ENCODE measurements at regions of chr16 and their contacts with region 1.

Region 1: GRCh38 chr16:88700636-88701482 is 5.3 kb downstream of the RNF166 start:
- DNase-seq: peak; percentile 86 to 96 (median 93)
- ATAC-seq: peak; percentile 91
- H3K4me3 ChIP-seq: peak overlapping the region; percentile 56
- H3K4me3 Mint-ChIP-seq: peak overlapping the region; percentile 78 to 98 (median 94)
- H3K27ac ChIP-seq: peak overlapping the region; percentile 88
- H3K27ac Mint-ChIP-seq: peak overlapping the region; percentile 85 to 98 (median 97)
- H3K4me1 ChIP-seq: peaks cover 32 to 60% of the 10 kb centered on the region in 2 donors
- H3K4me1 Mint-ChIP-seq: peaks cover 36 to 69% (median 47%) of the 10 kb centered on the region in 7 donors
- H3K27me3 ChIP-seq: no peaks in the 10 kb centered on the region
- H3K27me3 Mint-ChIP-seq: no peaks in the 10 kb centered on the region

Region 2: DNA sequence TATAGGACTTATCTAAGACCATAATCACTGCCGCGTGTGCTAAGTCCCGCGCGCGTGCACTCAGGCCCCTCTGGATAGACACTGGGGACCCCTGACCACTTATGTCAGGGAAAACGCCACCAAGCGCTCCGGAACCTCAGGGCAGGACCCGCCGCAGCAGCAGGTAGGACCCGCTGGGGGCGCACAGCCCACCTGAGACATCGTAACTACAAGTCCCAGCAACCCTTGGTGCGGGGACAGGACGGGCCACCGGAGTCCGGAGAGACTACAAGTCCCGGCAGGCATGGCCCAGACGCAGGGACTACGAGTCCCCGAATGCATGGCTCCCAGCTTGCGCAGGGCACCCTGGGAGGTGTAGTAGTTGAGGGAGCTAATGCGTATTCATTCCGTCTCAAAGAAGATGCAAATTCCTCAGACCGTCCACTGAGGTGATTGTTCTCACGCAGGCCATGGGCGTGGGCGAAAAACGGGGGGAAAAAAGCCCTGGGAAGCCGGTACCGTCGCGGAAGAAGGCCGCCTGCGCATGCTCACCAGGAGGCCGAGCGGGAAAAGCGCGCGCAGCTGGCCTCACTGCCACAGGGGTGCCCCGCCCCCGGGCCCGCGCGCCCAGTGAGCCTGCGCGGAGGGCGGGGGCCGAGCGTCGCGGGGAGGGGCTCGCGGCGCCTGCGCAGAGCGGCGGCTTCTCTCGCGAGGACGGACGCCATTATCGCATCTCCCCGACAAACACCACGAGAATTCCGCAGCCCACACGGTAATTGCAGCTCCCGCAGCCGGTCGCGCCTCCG is 749.9 kb before region 1 on chr16 and contains the start of gene BANP:
- CTCF ChIA-PET with region 1: no interaction called
- POLR2A ChIA-PET with region 1: no interaction called
- intact Hi-C with region 1: loop called (anchors 5 to 10 kb)
- DNase-seq: peak; percentile 96 to 99 (median 99)
- ATAC-seq: peak; percentile 93
- H3K4me3 ChIP-seq: peak within 1 kb of the TSS; percentile 83
- H3K4me3 Mint-ChIP-seq: peak within 1 kb of the TSS; percentile 92 to 100 (median 99)
- H3K27ac ChIP-seq: peak within 1 kb of the TSS; percentile 90
- H3K27ac Mint-ChIP-seq: peak within 1 kb of the TSS; percentile 97 to 100 (median 99)
- H3K4me1 ChIP-seq: peaks cover 15 to 33% of the 10 kb centered on the region in 2 donors
- H3K4me1 Mint-ChIP-seq: peaks cover 27 to 66% (median 43%) of the 10 kb centered on the region in 7 donors
- H3K27me3 ChIP-seq: no peaks in the 10 kb centered on the region
- H3K27me3 Mint-ChIP-seq: peaks cover 0 to 8% (median 2%) of the 10 kb centered on the region in 5 donors
- total RNA-seq, gene BANP: 43.6 to 81.2 (median 68.5) TPM

Region 3: DNA sequence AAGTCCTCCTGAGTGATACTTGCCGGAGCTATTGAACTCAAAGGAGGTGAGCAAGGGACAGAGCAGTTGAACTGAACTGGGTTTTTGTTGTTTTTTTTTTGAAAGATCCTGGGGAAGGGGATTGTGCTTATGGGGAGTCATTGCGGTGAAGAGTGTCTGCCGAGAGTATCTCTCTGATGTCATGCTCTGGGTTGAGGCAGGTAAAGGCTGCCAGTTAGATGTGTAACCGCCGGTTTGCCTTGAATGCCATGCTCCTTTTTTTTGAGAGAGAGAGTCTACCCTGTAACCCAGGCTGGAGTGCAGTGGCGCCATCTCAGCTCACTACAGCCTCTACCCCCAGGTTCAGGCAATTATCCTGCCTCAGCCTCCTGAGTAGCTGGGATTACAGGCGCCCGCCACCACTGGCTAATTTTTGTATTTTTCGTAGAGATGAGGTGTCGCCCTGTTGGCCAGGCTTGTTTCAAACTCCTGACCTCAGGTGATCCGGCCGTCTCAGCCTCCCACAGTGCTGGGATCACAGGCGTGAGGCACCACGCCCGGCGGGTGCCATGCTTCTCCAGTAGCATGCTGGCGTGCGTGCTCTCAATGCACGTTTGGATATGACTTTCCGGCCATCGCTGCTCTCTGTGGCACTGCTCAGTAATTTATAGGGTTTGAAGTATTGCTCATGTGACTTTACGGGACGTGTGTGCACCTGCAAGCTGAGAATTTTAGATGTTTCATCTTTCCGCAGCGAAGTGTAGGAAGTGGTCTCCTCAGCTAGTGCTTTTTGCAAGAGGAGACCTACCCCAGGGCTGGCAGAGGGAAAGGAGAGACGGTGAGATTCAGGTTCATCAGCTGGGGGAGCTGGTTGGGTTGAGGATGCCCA is 122.2 kb before region 1 on chr16:
- CTCF ChIA-PET with region 1: no interaction called
- POLR2A ChIA-PET with region 1: no interaction called
- intact Hi-C with region 1: no loop called
- DNase-seq: peak in 3 of 9 donors; percentile 8 to 11 (median 8)
- ATAC-seq: peak; percentile 30
- H3K4me3 ChIP-seq: no peak overlapping the region
- H3K4me3 Mint-ChIP-seq: peak overlapping the region in 6 of 10 donors; percentile 14 to 53 (median 34)
- H3K27ac ChIP-seq: no peak overlapping the region
- H3K27ac Mint-ChIP-seq: peak overlapping the region in 6 of 9 donors; percentile 1 to 73 (median 60)
- H3K4me1 ChIP-seq: peaks cover 0 to 3% of the 10 kb centered on the region in 2 donors
- H3K4me1 Mint-ChIP-seq: peaks cover 20 to 64% (median 56%) of the 10 kb centered on the region in 7 donors
- H3K27me3 ChIP-seq: no peaks in the 10 kb centered on the region
- H3K27me3 Mint-ChIP-seq: no peaks in the 10 kb centered on the region

Region 4: GRCh38 chr16:88633684-88634140 is 67.1 kb before region 1 on chr16:
- CTCF ChIA-PET with region 1: no interaction called
- POLR2A ChIA-PET with region 1: interaction called, 3 read pairs
- intact Hi-C with region 1: loop called (anchors 2 to 5 kb)
- DNase-seq: peak in 2 of 9 donors; percentile 26 to 61
- ATAC-seq: peak; percentile 46
- H3K4me3 ChIP-seq: peak overlapping the region; percentile 52
- H3K4me3 Mint-ChIP-seq: peak overlapping the region; percentile 36 to 80 (median 63)
- H3K27ac ChIP-seq: peak overlapping the region; percentile 58
- H3K27ac Mint-ChIP-seq: peak overlapping the region in 2 of 9 donors; percentile 5 to 19
- H3K4me1 ChIP-seq: peaks cover 12 to 24% of the 10 kb centered on the region in 2 donors
- H3K4me1 Mint-ChIP-seq: peaks cover 17 to 36% (median 24%) of the 10 kb centered on the region in 7 donors
- H3K27me3 ChIP-seq: peaks cover 0 to under 1% of the 10 kb centered on the region in 2 donors
- H3K27me3 Mint-ChIP-seq: peaks cover 0 to 24% (median 8%) of the 10 kb centered on the region in 5 donors

Region 5: DNA sequence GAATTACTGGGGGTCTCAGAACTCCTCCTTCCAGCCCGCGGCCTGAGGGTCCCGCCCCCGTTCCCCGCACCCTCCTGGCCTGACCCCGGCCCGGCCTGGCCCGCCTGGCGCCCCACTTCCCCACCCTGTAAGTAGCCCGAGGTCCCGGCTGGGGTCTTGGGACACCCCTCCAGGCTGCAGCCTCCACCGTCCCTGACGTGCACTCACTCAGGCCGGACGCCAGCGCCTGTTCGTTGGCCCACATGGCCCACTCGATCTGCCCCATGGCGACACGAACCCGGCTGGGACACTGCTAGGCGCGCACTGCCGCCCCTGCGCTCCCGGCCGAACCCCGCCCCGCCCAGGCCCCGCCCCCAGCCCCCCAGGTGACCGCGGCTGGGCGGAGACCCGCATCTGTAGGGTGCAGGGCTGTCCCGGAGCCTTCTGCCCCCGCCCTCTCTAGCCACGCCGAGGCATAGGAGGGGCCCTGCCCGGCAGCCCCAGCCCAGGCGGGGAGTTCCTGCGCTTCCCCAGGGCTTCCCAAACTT is 50.0 kb before region 1 on chr16 and contains the start of gene CYBA:
- CTCF ChIA-PET with region 1: interaction called, 4 read pairs
- POLR2A ChIA-PET with region 1: interaction called, 13 read pairs
- intact Hi-C with region 1: loop called (anchors 1 kb)
- DNase-seq: peak; percentile 54 to 88 (median 68)
- ATAC-seq: peak; percentile 92
- H3K4me3 ChIP-seq: peak within 1 kb of the TSS; percentile 78
- H3K4me3 Mint-ChIP-seq: peak within 1 kb of the TSS; percentile 84 to 93 (median 90)
- H3K27ac ChIP-seq: peak within 1 kb of the TSS; percentile 84
- H3K27ac Mint-ChIP-seq: peak within 1 kb of the TSS; percentile 82 to 98 (median 91)
- H3K4me1 ChIP-seq: peaks cover 20 to 28% of the 10 kb centered on the region in 2 donors
- H3K4me1 Mint-ChIP-seq: peaks cover 6 to 27% (median 13%) of the 10 kb centered on the region in 7 donors
- H3K27me3 ChIP-seq: no peaks in the 10 kb centered on the region
- H3K27me3 Mint-ChIP-seq: no peaks in the 10 kb centered on the region
- total RNA-seq, gene CYBA: 240 to 498 (median 281) TPM

Region 6: DNA sequence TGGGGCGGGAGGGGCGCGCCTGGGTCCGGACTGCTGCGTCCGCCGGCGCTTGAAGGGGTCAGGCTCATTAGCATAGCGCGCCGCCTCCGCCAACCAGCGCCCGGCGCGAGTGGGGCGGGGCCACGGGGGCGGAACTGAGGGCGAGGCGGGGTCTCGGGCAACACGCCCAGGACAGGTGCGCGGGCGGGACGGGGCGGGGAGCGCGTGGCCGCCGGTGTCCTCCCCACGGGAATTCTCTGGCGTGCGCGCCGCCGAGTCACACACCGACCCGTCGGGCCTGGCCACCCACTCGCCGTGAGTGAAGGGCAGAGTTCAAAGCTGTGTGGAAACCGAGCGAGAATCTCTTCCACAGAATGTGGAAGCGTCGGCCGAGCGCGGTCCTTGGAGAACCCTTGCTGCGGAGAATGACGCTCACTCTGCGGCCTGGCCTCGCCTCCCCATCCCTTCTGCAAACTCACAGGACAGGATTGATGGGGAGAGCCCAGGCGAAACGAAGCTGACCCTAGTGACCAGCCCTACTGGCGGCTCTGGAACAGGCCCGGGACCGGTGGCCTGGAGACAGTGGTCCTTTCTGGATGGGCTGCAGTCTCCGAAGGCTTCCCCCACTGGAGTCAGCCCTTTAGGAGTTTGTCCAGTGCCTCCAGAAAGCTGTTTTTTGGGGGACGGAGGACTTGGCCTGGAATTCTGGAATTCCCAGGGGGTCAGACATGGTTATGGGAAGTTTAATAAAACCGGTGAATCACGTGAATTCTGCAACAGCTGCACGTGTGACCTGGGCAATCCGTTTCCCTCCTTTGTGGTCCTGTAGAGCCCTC is 14.2 kb before region 1 on chr16 and contains the start of gene SNAI3:
- CTCF ChIA-PET with region 1: interaction called, 17 read pairs
- POLR2A ChIA-PET with region 1: interaction called, 134 read pairs
- intact Hi-C with region 1: loop called (anchors 1 kb)
- DNase-seq: peak; percentile 69 to 96 (median 80)
- ATAC-seq: peak; percentile 91
- H3K4me3 ChIP-seq: peak within 1 kb of the TSS; percentile 85
- H3K4me3 Mint-ChIP-seq: peak within 1 kb of the TSS; percentile 72 to 87 (median 81)
- H3K27ac ChIP-seq: peak within 1 kb of the TSS; percentile 77
- H3K27ac Mint-ChIP-seq: peak within 1 kb of the TSS in 8 of 9 donors; percentile 6 to 81 (median 63)
- H3K4me1 ChIP-seq: peaks cover 21 to 48% of the 10 kb centered on the region in 2 donors
- H3K4me1 Mint-ChIP-seq: peaks cover 23 to 76% (median 59%) of the 10 kb centered on the region in 7 donors
- H3K27me3 ChIP-seq: no peaks in the 10 kb centered on the region
- H3K27me3 Mint-ChIP-seq: no peaks in the 10 kb centered on the region
- total RNA-seq, gene SNAI3: 2.7 to 13.0 (median 6.1) TPM

Region 7: GRCh38 chr16:88727871-88728270 is 27.0 kb after region 1 on chr16:
- CTCF ChIA-PET with region 1: no interaction called
- POLR2A ChIA-PET with region 1: no interaction called
- intact Hi-C with region 1: no loop called
- DNase-seq: no peak
- ATAC-seq: no peak
- H3K4me3 ChIP-seq: no peak overlapping the region
- H3K4me3 Mint-ChIP-seq: no peak overlapping the region
- H3K27ac ChIP-seq: no peak overlapping the region
- H3K27ac Mint-ChIP-seq: no peak overlapping the region
- H3K4me1 ChIP-seq: no peaks in the 10 kb centered on the region
- H3K4me1 Mint-ChIP-seq: peaks cover 0 to 8% (median 0%) of the 10 kb centered on the region in 7 donors
- H3K27me3 ChIP-seq: no peaks in the 10 kb centered on the region
- H3K27me3 Mint-ChIP-seq: no peaks in the 10 kb centered on the region

Region 8: GRCh38 chr16:88785106-88785924 is 84.5 kb after region 1 on chr16 and contains the start of gene PIEZO1:
- CTCF ChIA-PET with region 1: no interaction called
- POLR2A ChIA-PET with region 1: interaction called, 10 read pairs
- intact Hi-C with region 1: loop called in 1 of 2 experiments (anchors 1 kb)
- DNase-seq: peak; percentile 76 to 93 (median 85)
- ATAC-seq: peak; percentile 77
- H3K4me3 ChIP-seq: peak within 1 kb of the TSS; percentile 54
- H3K4me3 Mint-ChIP-seq: peak within 1 kb of the TSS; percentile 66 to 87 (median 76)
- H3K27ac ChIP-seq: peak within 1 kb of the TSS; percentile 72
- H3K27ac Mint-ChIP-seq: peak within 1 kb of the TSS in 6 of 9 donors; percentile 45 to 92 (median 61)
- H3K4me1 ChIP-seq: peaks cover 48 to 49% of the 10 kb centered on the region in 2 donors
- H3K4me1 Mint-ChIP-seq: peaks cover 35 to 45% (median 45%) of the 10 kb centered on the region in 7 donors
- H3K27me3 ChIP-seq: no peaks in the 10 kb centered on the region
- H3K27me3 Mint-ChIP-seq: no peaks in the 10 kb centered on the region
- total RNA-seq, gene PIEZO1: 84.5 to 237 (median 124) TPM